ENCODE measurements at regions of chr12 and their contacts with region 1.

Region 1: GRCh38 chr12:104473374-104473983 is 16.7 kb downstream of the CHST11 start:
- DNase-seq: peak; percentile 33
- H3K4me3 Mint-ChIP-seq: peak overlapping the region; percentile 52
- H3K27ac Mint-ChIP-seq: peak overlapping the region; percentile 76
- H3K4me1 Mint-ChIP-seq: peaks cover 85% of the 10 kb centered on the region
- H3K27me3 Mint-ChIP-seq: no peaks in the 10 kb centered on the region

Region 2: GRCh38 chr12:104177663-104178501 is 295.6 kb before region 1 on chr12:
- CTCF ChIA-PET with region 1: no interaction called
- POLR2A ChIA-PET with region 1: no interaction called
- DNase-seq: peak; percentile 46
- H3K4me3 Mint-ChIP-seq: no peak overlapping the region
- H3K27ac Mint-ChIP-seq: no peak overlapping the region
- H3K4me1 Mint-ChIP-seq: peaks cover 19% of the 10 kb centered on the region
- H3K27me3 Mint-ChIP-seq: peaks cover 10% of the 10 kb centered on the region

Region 3: DNA sequence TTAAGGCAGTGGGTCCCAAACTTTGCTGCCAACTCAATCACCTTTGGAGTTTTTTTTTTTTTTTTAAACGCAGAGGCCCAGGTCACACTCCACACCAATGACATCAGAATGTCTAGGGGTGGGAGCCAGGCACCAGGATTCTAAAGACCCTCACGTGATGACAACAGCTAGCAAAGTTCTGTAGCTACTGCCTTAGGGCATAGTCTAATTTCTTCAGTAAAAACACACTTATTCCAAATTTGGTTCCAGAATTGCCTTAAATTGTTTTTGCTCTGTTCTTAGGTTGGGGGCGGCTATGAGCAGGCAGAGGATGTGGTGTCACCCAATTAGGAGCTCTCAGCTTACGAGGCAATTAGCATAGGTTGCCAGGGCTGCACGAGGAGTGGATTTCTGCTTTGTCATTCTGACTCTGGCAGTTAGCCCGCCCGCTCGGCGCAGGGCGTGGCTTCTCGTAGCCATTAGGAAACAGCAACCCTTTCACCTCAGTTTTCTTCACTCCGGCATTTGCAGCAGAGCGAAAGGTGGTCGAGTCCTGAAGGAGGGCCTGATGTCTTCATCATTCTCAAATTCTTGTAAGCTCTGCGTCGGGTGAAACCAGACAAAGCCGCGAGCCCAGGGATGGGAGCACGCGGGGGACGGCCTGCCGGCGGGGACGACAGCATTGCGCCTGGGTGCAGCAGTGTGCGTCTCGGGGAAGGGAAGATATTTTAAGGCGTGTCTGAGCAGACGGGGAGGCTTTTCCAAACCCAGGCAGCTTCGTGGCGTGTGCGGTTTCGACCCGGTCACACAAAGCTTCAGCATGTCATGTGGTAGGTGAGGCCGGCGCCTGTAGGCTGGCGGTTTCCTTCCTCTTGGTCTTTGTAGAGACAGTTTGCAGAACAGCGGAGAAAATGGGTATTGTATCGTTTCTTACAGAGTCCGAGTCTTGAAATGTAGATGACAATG is 186.7 kb before region 1 on chr12:
- CTCF ChIA-PET with region 1: no interaction called
- POLR2A ChIA-PET with region 1: no interaction called
- DNase-seq: peak; percentile 94
- H3K4me3 Mint-ChIP-seq: peak overlapping the region; percentile 97
- H3K27ac Mint-ChIP-seq: peak overlapping the region; percentile 99
- H3K4me1 Mint-ChIP-seq: peaks cover 26% of the 10 kb centered on the region
- H3K27me3 Mint-ChIP-seq: no peaks in the 10 kb centered on the region

Region 4: DNA sequence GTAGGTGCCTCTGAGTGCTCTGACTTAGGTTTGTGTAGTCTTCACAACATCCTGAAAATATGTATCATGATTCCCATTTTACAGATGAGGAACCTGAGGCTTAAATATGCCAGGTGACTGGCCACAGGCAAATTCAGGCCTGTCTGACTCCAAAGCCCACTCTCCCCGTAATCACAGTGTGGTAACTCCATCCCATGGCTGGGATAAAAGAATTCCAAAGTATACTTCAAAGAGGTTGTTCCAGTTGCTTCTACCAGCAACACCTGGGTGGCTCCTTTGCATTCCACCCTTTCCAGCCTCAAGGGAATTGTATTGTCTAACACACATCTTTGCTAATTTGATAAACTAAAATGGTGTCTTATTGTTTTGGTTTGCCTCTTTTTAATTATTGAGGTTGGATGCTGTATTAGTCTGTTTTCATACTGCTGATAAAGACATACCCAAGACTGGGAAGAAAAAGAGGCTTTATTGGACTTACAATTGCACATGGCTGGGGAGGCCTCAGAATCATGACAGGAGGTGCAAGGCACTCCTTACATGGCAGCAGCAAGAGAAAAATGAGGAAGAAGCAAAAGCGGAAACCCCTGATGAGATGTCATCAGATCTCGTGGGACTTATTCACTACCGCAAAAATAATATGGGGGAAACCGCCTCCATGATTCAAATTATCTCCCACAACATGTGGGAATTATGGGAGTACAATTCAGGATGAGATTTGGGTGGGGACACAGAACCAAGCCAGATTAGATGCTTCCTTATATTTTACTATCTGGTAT is 26.6 kb before region 1 on chr12:
- CTCF ChIA-PET with region 1: no interaction called
- POLR2A ChIA-PET with region 1: no interaction called
- DNase-seq: no peak
- H3K4me3 Mint-ChIP-seq: no peak overlapping the region
- H3K27ac Mint-ChIP-seq: no peak overlapping the region
- H3K4me1 Mint-ChIP-seq: no peaks in the 10 kb centered on the region
- H3K27me3 Mint-ChIP-seq: peaks cover 2% of the 10 kb centered on the region

Region 5: GRCh38 chr12:104485651-104486362 is 12.3 kb after region 1 on chr12:
- CTCF ChIA-PET with region 1: no interaction called
- POLR2A ChIA-PET with region 1: interaction called, 10 read pairs
- DNase-seq: peak; percentile 72
- H3K4me3 Mint-ChIP-seq: peak overlapping the region; percentile 39
- H3K27ac Mint-ChIP-seq: peak overlapping the region; percentile 86
- H3K4me1 Mint-ChIP-seq: peaks cover 93% of the 10 kb centered on the region
- H3K27me3 Mint-ChIP-seq: no peaks in the 10 kb centered on the region

Measured in activated CD4-positive, alpha-beta memory T cell treated with anti-CD3 and anti-CD28 coated beads, Interleukin-2, amount 10 ng/mL, durations not matched to agents 7 days and 5 days (primary cell).